ENCODE measurements at regions of chr16 and their contacts with region 1.

Region 1: GRCh38 chr16:78503602-78504001 is 404.1 kb downstream of the WWOX start:
- DNase-seq: peak; percentile 68
- H3K4me3 ChIP-seq: no peak overlapping the region
- H3K27ac ChIP-seq: no peak overlapping the region
- H3K4me1 ChIP-seq: peaks cover 10% of the 10 kb centered on the region
- H3K27me3 ChIP-seq: no peaks in the 10 kb centered on the region
- CTCF ChIP-seq: peak; percentile 82 to 92 (median 86)
- POLR2A ChIP-seq: no peak

Region 2: GRCh38 chr16:78122774-78123315 is 380.8 kb before region 1 on chr16:
- intact Hi-C with region 1: loop called (anchors 10 kb)
- DNase-seq: peak; percentile 75
- H3K4me3 ChIP-seq: no peak overlapping the region
- H3K27ac ChIP-seq: peak overlapping the region; percentile 82 to 86
- H3K4me1 ChIP-seq: no peaks in the 10 kb centered on the region
- H3K27me3 ChIP-seq: no peaks in the 10 kb centered on the region
- CTCF ChIP-seq: peak in 3 of 4 experiments; percentile 64 to 84 (median 81)
- POLR2A ChIP-seq: no peak

Region 3: DNA sequence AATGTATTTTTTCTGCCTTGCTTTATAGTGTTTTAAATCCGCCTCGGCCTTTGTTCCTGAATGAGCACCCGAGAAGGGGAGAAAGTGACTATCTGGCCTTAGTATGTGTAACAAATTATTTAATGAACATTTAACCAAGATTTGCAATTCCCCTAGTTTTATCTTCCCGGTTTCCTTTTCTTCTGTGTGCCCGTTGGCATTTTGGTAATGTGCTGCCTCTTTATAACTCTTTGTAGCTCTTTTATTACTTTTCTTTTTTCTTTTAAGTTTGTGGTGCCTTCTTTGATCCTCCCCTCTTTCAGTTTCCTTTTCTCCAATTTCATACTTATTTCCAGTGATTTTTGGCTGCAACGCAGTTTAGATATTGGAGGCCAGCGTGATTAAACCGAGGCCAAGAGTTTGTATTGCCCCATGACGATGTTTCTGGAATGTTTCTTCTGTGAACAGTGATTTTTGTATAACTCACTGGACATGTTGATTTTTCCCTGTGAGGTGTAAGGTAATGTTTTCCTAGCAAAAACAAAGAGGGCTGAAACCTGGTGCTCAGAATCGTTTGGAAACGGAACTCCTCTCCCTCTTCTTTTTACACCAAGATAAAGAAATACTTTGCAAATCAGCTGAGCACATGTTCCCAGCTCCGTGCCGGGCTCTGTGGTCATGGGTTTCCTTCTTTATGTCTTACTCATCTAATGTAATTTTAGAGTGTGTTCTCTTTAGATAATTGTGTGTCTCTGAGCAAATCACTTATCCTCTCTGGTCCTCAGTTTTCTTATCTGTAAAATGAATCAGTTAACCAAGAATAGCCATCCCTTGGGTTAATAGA is 59.8 kb before region 1 on chr16:
- intact Hi-C with region 1: no loop called
- DNase-seq: no peak
- H3K4me3 ChIP-seq: no peak overlapping the region
- H3K27ac ChIP-seq: no peak overlapping the region
- H3K4me1 ChIP-seq: no peaks in the 10 kb centered on the region
- H3K27me3 ChIP-seq: no peaks in the 10 kb centered on the region
- CTCF ChIP-seq: no peak
- POLR2A ChIP-seq: no peak

Region 4: DNA sequence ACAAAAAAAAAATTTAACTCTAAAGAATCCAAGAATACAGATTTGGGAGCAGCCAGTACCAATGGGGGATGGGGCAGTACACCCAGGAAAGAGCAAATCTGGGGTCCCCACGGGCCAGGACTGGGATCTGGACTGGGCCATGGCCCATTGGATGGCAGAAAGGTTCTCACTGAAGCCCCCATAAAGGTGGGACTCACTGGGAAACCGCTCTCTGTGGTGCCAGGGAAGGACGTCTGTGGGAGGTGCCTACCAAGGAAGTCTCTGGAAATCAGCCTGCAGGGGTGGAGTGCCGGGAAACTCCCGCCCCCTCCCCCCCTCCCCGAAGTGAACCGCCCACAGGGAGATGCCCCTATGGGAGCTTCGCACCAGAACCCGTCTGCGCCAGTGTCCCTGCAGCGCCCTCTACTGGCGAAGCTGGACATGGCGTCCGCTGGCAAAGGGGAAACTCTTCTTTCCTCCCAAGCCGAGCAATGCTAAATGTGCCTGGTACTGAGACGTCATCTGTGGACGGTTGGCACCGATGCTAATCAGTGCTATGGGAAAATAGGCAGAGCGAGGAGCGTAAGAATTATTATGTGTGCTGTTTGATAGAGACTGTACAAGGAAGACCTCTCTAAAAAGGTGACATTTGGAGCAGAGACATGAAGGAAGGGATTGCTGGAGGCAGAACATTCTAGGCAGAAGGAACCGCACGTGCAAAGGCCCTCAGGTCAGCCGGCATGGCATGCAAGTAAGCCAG is 266.9 kb after region 1 on chr16:
- intact Hi-C with region 1: loop called (anchors 2 kb)
- DNase-seq: peak; percentile 42
- H3K4me3 ChIP-seq: no peak overlapping the region
- H3K27ac ChIP-seq: no peak overlapping the region
- H3K4me1 ChIP-seq: no peaks in the 10 kb centered on the region
- H3K27me3 ChIP-seq: no peaks in the 10 kb centered on the region
- CTCF ChIP-seq: peak; percentile 55 to 90 (median 68)
- POLR2A ChIP-seq: no peak

Region 5: DNA sequence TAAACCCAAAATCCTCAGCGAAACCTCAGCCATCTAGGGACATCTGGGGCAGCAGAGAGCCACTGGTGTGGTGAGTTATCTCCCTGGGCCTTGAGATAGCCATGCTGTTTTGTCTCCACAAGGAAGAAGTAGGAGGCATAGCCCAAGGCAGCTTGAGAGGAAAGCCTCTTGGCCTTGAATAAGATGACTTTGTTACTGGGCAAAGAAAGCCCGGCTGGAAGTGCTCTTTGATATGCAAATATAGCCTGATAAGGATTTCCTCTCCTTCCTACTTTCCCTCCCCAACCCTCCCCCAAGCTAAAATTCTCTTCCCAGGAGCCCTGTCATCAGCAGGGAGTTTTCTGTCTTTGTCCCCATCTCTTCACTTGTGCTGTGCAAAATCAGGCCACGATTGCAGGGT is 402.5 kb after region 1 on chr16:
- intact Hi-C with region 1: no loop called
- DNase-seq: no peak
- H3K4me3 ChIP-seq: no peak overlapping the region
- H3K27ac ChIP-seq: no peak overlapping the region
- H3K4me1 ChIP-seq: no peaks in the 10 kb centered on the region
- H3K27me3 ChIP-seq: no peaks in the 10 kb centered on the region
- CTCF ChIP-seq: no peak
- POLR2A ChIP-seq: no peak

Region 6: DNA sequence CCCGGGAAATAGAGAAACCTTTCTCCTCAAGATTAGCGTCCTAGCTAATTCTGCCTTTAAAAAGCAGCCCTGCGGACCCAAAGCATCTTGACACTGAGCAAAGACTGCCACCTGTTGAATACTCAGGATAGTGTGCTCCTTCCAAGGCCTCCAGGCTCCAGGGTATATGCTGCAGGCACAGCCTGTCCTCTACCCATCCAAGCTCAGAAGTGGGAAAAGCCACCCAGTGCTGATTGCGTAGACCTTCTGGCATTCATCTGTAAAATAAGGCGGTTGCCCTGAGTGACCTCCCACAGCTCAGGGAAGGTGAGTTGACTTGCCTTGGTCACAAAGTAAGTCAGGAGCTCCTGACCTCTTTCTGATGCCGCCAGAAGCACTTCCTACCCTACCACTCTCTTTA is 1581.1 kb after region 1 on chr16:
- intact Hi-C with region 1: loop called (anchors 5 kb)
- DNase-seq: peak; percentile 58
- H3K4me3 ChIP-seq: no peak overlapping the region
- H3K27ac ChIP-seq: no peak overlapping the region
- H3K4me1 ChIP-seq: no peaks in the 10 kb centered on the region
- H3K27me3 ChIP-seq: no peaks in the 10 kb centered on the region
- CTCF ChIP-seq: peak; percentile 45 to 75 (median 60)
- POLR2A ChIP-seq: no peak

Region 7: GRCh38 chr16:80369138-80369958 is 1865.7 kb after region 1 on chr16:
- intact Hi-C with region 1: loop called (anchors 10 kb)
- DNase-seq: peak; percentile 42
- H3K4me3 ChIP-seq: no peak overlapping the region
- H3K27ac ChIP-seq: no peak overlapping the region
- H3K4me1 ChIP-seq: no peaks in the 10 kb centered on the region
- H3K27me3 ChIP-seq: peaks cover 3% of the 10 kb centered on the region
- CTCF ChIP-seq: peak in 3 of 4 experiments; percentile 28 to 69 (median 58)
- POLR2A ChIP-seq: no peak

Region 8: DNA sequence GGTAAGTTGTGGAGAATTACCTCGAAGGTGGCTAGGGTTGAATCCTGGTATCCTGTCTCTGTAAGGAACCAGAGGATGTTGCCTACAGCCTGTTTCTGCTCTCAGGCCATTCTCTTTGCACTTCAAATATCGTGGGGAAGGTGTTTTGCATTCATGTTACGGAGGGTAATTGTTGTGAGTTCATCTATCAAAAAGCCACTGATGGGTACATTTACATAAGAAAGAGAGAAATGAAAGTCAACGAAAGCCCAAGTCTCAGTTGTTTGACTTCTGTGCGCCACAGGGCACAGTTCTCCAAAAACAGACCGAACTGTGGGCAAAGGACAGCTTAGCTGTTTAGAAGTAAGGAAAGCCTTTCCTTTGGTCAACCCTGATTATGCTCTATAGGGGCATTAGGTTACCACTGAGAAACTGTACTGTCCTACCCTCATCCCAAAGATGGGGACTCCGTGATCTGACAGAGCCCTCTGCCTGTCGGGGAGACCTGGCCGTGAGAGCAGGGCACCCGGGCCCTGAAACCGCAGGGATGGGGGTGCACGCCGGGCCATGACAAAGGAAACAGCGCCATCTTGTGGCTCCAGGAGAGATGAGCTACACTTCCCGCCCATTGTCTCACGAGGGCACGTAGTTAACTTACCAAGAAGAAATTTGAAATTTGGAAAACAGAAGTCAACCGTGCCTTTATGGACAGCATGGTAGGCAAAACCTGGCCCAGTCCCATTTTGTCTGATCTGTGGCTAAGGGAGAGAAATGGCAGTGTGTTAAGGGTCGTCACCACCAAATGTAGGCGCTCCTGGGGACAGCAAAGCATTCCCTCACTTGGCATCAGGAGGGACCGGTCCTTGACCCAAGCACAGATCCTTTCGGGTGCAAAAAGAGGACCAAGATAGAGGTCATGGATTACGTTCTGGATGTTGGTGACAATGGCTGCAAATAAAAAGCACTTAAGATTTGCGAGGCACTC is 1962.7 kb after region 1 on chr16:
- intact Hi-C with region 1: loop called (anchors 10 kb)
- DNase-seq: peak; percentile 55
- H3K4me3 ChIP-seq: no peak overlapping the region
- H3K27ac ChIP-seq: no peak overlapping the region
- H3K4me1 ChIP-seq: no peaks in the 10 kb centered on the region
- H3K27me3 ChIP-seq: no peaks in the 10 kb centered on the region
- CTCF ChIP-seq: peak; percentile 68 to 82 (median 78)
- POLR2A ChIP-seq: no peak